IMR-90 (cell line): ENCODE measurements at regions of chr1 and their contacts with region 1.

Region 1: DNA sequence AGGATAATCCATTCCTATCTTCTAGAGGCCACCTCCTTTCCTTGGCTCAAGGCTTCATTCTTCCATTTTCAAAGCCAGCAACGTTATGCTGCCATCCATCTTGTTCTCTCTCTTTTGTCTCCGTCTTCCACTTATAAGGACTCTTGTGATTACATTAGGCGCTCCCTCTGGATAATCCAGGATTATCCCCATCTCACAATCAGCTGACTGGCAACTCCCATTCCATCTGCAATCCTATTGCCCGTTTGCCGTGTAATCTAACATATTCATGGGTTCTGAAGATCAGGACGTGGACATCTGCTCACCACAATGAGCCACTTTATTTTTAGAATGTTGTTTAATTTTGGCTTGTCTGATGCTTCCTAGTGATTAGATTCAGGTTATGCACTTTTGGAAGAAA is 89.3 kb downstream of the EBNA1BP2 start:
- DNase-seq: no peak
- ATAC-seq: no peak
- H3K4me3 ChIP-seq: no peak overlapping the region
- H3K27ac ChIP-seq: no peak overlapping the region
- H3K4me1 ChIP-seq: no peaks in the 10 kb centered on the region
- H3K27me3 ChIP-seq: peaks cover 2% of the 10 kb centered on the region
- CTCF ChIP-seq: no peak
- POLR2A ChIP-seq: no peak
- RAD21 ChIP-seq: no peak

Region 2: DNA sequence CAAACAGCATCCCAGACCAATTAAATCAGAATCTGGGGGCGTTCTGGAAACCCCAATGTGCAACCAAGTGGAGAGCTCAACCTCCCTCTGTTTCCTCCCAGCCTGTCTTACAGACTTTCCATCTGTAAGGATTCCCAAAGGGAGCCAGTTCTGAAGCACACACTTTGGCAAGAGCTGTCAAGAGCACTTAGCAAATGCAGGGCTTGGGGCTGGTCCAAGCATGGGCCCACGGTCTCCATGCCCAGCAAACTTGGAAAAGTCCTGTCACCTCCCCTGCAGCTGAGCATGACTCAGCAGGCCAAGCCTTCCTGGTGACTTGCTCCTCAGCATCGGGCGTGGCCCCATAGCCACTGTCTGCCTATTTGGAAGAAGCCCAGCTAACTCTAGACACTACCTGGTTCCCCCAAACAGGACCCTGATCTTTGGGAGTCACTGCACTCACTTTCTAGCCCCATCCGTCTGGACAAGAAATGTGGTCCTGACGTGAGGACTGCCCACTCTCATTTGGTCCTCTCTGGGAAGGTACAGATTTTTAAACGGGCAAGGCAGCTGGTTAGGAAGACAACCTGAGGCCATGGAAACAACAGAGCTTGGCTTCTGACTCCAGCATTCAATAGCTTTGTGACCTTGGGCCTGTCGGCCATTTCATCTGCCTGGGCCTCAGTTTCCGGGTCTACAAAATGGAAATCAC is 141.0 kb before region 1 on chr1:
- CTCF ChIA-PET with region 1: no interaction called
- POLR2A ChIA-PET with region 1: no interaction called
- dilution Hi-C with region 1: no loop called
- in situ Hi-C with region 1: no loop called
- intact Hi-C with region 1: no loop called
- DNase-seq: peak; percentile 82
- ATAC-seq: peak; percentile 16
- H3K4me3 ChIP-seq: no peak overlapping the region
- H3K27ac ChIP-seq: peak overlapping the region; percentile 98
- H3K4me1 ChIP-seq: peaks cover 75% of the 10 kb centered on the region
- H3K27me3 ChIP-seq: no peaks in the 10 kb centered on the region
- CTCF ChIP-seq: no peak
- POLR2A ChIP-seq: no peak
- RAD21 ChIP-seq: no peak

Region 3: GRCh38 chr1:43143441-43143888 is 60.7 kb after region 1 on chr1:
- CTCF ChIA-PET with region 1: no interaction called
- POLR2A ChIA-PET with region 1: no interaction called
- dilution Hi-C with region 1: no loop called
- in situ Hi-C with region 1: no loop called
- intact Hi-C with region 1: loop called (anchors 5 kb)
- DNase-seq: no peak
- ATAC-seq: no peak
- H3K4me3 ChIP-seq: no peak overlapping the region
- H3K27ac ChIP-seq: no peak overlapping the region
- H3K4me1 ChIP-seq: no peaks in the 10 kb centered on the region
- H3K27me3 ChIP-seq: peaks cover 19% of the 10 kb centered on the region
- CTCF ChIP-seq: 0 out of 2 replicates have a peak, but pooled peaks have one; percentile 8
- POLR2A ChIP-seq: no peak
- RAD21 ChIP-seq: no peak

Region 4: GRCh38 chr1:43414634-43415223 is 332.0 kb after region 1 on chr1:
- CTCF ChIA-PET with region 1: no interaction called
- POLR2A ChIA-PET with region 1: no interaction called
- dilution Hi-C with region 1: no loop called
- in situ Hi-C with region 1: no loop called
- intact Hi-C with region 1: no loop called
- DNase-seq: peak; percentile 52
- ATAC-seq: peak; percentile 88
- H3K4me3 ChIP-seq: no peak overlapping the region
- H3K27ac ChIP-seq: no peak overlapping the region
- H3K4me1 ChIP-seq: no peaks in the 10 kb centered on the region
- H3K27me3 ChIP-seq: no peaks in the 10 kb centered on the region
- CTCF ChIP-seq: peak; percentile 66
- POLR2A ChIP-seq: no peak
- RAD21 ChIP-seq: peak; percentile 83